ENCODE measurements at regions of chr12 and their contacts with region 1.

Region 1: GRCh38 chr12:112978163-112979040 is at the start of gene OAS2:
- DNase-seq: peak; percentile 82 to 92 (median 87)
- H3K4me3 ChIP-seq: peak within 1 kb of the TSS; percentile 87 to 88
- H3K4me3 Mint-ChIP-seq: peak within 1 kb of the TSS; percentile 88 to 100 (median 99)
- H3K27ac ChIP-seq: peak within 1 kb of the TSS; percentile 91
- H3K27ac Mint-ChIP-seq: peak within 1 kb of the TSS; percentile 97 to 99 (median 99)
- H3K4me1 ChIP-seq: peaks cover 51% of the 10 kb centered on the region
- H3K4me1 Mint-ChIP-seq: peaks cover 28 to 58% (median 45%) of the 10 kb centered on the region in 4 donors
- H3K27me3 ChIP-seq: no peaks in the 10 kb centered on the region
- H3K27me3 Mint-ChIP-seq: no peaks in the 10 kb centered on the region
- total RNA-seq, gene OAS2: 73.5 to 77.4 TPM

Region 2: GRCh38 chr12:112961074-112961473 is 17.3 kb before region 1 on chr12:
- CTCF ChIA-PET with region 1: interaction called, 6 read pairs
- POLR2A ChIA-PET with region 1: interaction called, 18 read pairs
- intact Hi-C with region 1: no loop called
- DNase-seq: no peak
- H3K4me3 ChIP-seq: no peak overlapping the region
- H3K4me3 Mint-ChIP-seq: no peak overlapping the region
- H3K27ac ChIP-seq: no peak overlapping the region
- H3K27ac Mint-ChIP-seq: peak overlapping the region in 2 of 7 donors; percentile 54 to 67
- H3K4me1 ChIP-seq: no peaks in the 10 kb centered on the region
- H3K4me1 Mint-ChIP-seq: peaks cover 9 to 25% (median 16%) of the 10 kb centered on the region in 4 donors
- H3K27me3 ChIP-seq: no peaks in the 10 kb centered on the region
- H3K27me3 Mint-ChIP-seq: no peaks in the 10 kb centered on the region